Activated B cell treated with CpG ODN at 0.5 μM for 24 hours (primary cell): ENCODE measurements at regions of chr19 and their contacts with region 1.

Region 1: DNA sequence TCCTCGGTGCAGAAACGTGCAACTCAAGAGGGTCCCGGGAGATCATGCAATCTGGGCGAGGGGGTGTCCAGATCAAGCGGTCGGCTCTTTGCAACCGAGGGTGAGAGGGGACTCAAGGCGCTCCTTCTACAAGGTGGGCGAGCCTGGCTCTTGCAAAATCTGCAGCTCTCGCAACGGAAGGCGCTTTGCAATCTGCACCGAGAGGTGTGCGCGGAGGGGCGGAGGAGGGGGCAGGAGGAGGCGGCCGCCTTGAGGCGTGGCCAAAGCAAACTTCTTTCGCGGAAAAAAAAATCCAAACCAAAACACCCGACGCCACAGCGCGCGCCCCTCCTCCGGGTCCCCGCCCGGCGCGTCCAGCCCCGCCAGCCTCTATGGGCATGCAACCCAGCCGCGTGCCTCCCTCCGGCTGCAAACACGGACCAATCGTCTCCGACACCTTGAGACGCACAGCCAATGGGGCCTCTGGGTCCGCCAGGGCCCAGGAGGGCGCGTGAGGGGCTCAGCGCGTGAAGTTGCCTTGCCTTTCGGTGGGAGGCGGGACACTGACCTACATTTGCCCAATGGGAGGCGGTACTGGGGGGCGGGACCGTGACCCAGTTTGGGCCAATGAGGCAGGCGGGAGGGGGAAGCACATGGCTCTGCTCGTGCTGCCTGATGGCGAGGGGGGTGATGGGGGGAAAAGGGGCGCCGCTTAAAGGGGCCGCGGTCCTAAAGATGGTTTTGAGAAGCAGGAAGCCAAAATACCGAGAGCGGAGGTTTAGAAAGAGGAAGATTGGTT is at the start of gene DBP:
- DNase-seq: peak; percentile 97
- ATAC-seq: peak; percentile 72
- H3K4me3 Mint-ChIP-seq: peak within 1 kb of the TSS; percentile 93
- H3K27ac Mint-ChIP-seq: peak within 1 kb of the TSS; percentile 99
- H3K4me1 Mint-ChIP-seq: peaks cover 68% of the 10 kb centered on the region
- H3K27me3 Mint-ChIP-seq: no peaks in the 10 kb centered on the region
- CTCF ChIP-seq: no peak
- total RNA-seq, gene DBP: 8.7 and 9.2 TPM in 2 replicates

Region 2: DNA sequence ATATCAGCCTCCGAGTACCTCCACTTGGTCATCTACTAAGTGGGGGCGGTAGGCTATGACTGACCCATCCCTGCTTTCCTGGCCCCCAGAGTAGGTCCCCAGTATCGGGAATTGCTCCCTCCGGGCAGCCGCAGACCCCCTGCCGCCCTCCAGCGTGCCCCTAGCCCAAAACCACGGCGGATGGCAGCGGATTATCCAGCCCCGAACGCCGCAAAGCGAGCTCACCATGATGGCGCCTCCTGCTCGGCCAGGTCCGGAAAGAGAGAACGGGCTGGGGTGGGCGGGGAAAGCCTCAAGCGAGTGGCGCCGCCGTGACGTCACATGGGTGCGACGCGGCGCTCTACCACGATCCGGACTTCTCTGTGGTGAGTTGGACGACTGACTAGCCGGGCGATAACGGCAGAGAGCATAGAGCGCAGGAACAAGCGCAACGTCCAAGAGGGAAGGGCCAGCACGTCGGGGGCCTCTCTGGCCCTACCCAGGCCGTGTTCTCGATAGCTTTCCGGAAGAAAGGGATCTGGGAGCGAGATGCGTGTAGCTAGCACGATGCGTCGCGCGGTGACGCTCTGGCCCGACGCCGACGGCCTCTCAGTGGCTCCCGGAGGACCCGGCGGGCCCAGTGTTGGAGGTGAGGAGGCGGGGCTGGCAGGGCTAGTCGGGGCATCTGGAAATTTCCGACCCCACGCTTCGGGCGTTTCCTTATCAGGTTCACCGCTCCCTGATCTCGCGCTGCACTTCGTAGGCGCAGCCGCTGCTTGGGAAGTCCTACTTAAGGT is 18.3 kb before region 1 on chr19 and contains the starts of genes RPL18 and SPHK2:
- CTCF ChIA-PET with region 1: interaction called, 6 read pairs
- POLR2A ChIA-PET with region 1: interaction called, 67 read pairs
- intact Hi-C with region 1: loop called (anchors 1 kb)
- DNase-seq: peak; percentile 93
- ATAC-seq: peak; percentile 81
- H3K4me3 Mint-ChIP-seq: peak within 1 kb of the TSS; percentile 98
- H3K27ac Mint-ChIP-seq: peak within 1 kb of the TSS; percentile 97
- H3K4me1 Mint-ChIP-seq: peaks cover 56% of the 10 kb centered on the region
- H3K27me3 Mint-ChIP-seq: no peaks in the 10 kb centered on the region
- CTCF ChIP-seq: no peak
- total RNA-seq, gene RPL18: 2,427 and 2,762 TPM in 2 replicates
- total RNA-seq, gene SPHK2: 38.2 and 48.5 TPM in 2 replicates

Region 3: GRCh38 chr19:48705431-48705830 is 68.1 kb after region 1 on chr19:
- CTCF ChIA-PET with region 1: no interaction called
- POLR2A ChIA-PET with region 1: no interaction called
- intact Hi-C with region 1: no loop called
- DNase-seq: no peak
- ATAC-seq: no peak
- H3K4me3 Mint-ChIP-seq: no peak overlapping the region
- H3K27ac Mint-ChIP-seq: no peak overlapping the region
- H3K4me1 Mint-ChIP-seq: no peaks in the 10 kb centered on the region
- H3K27me3 Mint-ChIP-seq: no peaks in the 10 kb centered on the region
- CTCF ChIP-seq: no peak

Region 4: GRCh38 chr19:48738557-48739399 is 101.4 kb after region 1 on chr19:
- CTCF ChIA-PET with region 1: no interaction called
- POLR2A ChIA-PET with region 1: interaction called, 6 read pairs
- intact Hi-C with region 1: loop called (anchors 2 kb)
- DNase-seq: peak; percentile 86
- ATAC-seq: peak; percentile 94
- H3K4me3 Mint-ChIP-seq: peak overlapping the region; percentile 66
- H3K27ac Mint-ChIP-seq: peak overlapping the region; percentile 70
- H3K4me1 Mint-ChIP-seq: peaks cover 20% of the 10 kb centered on the region
- H3K27me3 Mint-ChIP-seq: peaks cover 8% of the 10 kb centered on the region
- CTCF ChIP-seq: no peak

Region 5: DNA sequence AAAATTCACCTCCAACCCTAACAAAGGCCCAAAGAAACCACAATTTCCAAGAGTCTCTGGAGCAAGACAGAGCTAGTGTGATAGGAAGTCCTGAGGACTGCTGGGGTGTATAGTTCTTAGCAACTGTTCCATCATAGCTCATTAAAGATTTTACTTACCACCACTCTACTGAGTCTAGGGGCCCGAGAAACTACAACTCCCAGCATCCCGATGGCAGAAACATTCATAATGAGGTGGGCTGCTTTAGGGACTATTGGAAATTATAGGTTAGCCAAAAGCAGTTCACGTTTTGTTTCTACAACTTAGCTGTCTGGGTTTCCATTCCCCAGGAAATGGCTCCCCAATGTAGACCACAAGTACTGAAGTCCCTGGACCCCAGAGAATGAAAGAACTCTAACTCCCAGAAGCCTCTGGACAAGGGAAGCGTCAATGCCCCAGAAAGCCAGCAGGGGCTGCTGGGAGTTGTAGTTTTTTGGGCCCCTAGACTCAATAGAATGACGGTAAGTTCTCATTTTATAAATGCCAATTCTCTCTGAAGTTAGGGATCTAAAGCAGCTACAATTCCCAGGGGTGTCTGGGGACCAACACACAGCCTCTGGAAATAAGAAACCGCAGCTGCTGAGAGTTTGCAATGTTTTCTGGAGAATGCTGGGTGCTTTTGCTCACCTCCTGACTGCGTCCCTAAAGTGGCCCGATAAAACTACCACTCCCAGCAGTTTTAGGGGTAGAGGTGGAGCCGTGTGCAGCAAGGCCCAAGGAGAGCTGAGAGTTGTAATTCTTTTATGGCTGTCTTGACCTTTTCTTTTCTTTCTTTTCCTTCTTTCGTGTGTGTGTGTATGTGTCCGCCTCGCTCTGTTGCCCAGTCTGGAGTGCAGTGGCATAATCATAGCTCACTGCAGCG is 338.8 kb after region 1 on chr19:
- CTCF ChIA-PET with region 1: no interaction called
- POLR2A ChIA-PET with region 1: interaction called, 14 read pairs
- intact Hi-C with region 1: no loop called
- DNase-seq: no peak
- ATAC-seq: peak; percentile 64
- H3K4me3 Mint-ChIP-seq: no peak overlapping the region
- H3K27ac Mint-ChIP-seq: no peak overlapping the region
- H3K4me1 Mint-ChIP-seq: peaks cover 8% of the 10 kb centered on the region
- H3K27me3 Mint-ChIP-seq: no peaks in the 10 kb centered on the region
- CTCF ChIP-seq: no peak

Region 6: DNA sequence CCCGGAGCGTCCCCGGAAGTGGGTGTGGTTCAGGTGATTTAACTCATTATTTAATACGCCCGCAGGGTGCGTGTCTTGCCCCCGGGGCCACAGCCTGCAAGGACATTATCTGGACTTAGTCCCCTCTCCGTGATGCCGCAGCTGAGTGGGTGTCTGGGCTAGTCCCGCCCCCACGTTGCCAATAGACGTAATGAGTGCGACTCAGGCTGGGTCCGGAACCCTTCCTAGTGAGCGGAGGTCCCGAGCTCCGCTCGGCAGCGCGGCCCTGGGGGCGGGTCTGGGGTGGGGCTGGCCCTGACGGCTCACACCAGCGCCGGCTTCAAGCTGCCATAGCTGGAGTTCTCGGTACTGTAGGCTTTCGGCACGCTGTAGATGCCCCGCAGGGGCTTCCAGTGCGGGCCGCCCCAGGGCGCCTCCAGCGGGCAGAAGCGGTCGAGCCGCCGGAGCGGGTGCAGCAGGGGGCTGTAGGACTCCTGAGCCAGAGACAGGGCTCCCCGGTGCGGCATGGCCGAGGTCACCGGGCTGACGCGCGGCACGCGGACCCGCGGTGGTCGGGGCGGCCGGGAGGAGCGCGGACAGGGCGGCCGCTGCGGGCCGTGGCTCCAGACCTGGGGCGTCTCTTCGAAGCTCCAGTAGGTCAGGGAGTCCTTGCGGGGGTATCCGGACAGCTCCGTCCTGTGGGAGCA is 380.4 kb after region 1 on chr19:
- CTCF ChIA-PET with region 1: no interaction called
- POLR2A ChIA-PET with region 1: no interaction called
- intact Hi-C with region 1: no loop called
- DNase-seq: peak; percentile 70
- ATAC-seq: peak; percentile 77
- H3K4me3 Mint-ChIP-seq: peak overlapping the region; percentile 87
- H3K27ac Mint-ChIP-seq: no peak overlapping the region
- H3K4me1 Mint-ChIP-seq: peaks cover 32% of the 10 kb centered on the region
- H3K27me3 Mint-ChIP-seq: peaks cover 3% of the 10 kb centered on the region
- CTCF ChIP-seq: no peak

Region 7: GRCh38 chr19:49590071-49590970 is 953.0 kb after region 1 on chr19:
- CTCF ChIA-PET with region 1: no interaction called
- POLR2A ChIA-PET with region 1: no interaction called
- intact Hi-C with region 1: loop called (anchors 5 kb)
- DNase-seq: peak; percentile 96
- ATAC-seq: peak; percentile 81
- H3K4me3 Mint-ChIP-seq: peak overlapping the region; percentile 85
- H3K27ac Mint-ChIP-seq: peak overlapping the region; percentile 89
- H3K4me1 Mint-ChIP-seq: peaks cover 34% of the 10 kb centered on the region
- H3K27me3 Mint-ChIP-seq: no peaks in the 10 kb centered on the region
- CTCF ChIP-seq: no peak